ENCODE measurements at regions of chr14 and their contacts with region 1.

Region 1: DNA sequence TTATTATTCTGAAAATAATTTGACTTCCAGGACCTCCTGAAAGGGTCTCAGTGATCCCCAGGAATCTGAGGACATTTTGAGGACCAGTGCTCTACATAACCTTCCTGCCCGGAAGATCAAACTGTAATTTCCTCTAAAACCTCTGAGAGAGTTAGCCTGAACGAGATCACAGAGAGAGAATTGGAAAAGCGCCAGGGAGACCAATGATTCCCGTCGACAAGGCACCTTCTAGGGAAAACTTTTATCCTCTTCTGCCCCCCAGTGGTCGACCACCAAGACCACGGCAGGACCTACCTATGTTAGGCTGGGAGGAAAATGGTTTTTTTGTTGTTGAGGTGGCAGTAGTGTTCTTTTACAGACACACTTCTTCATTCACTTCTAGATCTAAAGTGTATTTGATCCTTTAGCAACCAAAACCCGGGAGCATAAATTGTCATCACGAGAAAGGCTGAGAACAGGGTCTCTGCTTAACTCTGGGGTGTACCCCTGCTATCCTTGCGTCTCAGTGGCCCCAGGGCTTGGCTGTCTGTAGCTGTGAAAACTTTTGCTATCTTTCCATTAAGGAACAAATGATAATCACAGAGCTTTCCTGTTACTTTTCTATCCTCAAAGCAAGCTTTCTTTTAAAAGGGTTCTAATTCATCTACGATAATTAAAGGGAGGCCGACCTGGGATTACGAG is 62.9 kb upstream of the NID2 start:
- DNase-seq: peak; percentile 85 to 89
- H3K4me3 ChIP-seq: no peak overlapping the region
- H3K4me3 Mint-ChIP-seq: no peak overlapping the region
- H3K27ac Mint-ChIP-seq: no peak overlapping the region
- H3K4me1 ChIP-seq: no peaks in the 10 kb centered on the region
- H3K4me1 Mint-ChIP-seq: no peaks in the 10 kb centered on the region
- H3K27me3 ChIP-seq: no peaks in the 10 kb centered on the region
- H3K27me3 Mint-ChIP-seq: no peaks in the 10 kb centered on the region
- CTCF ChIP-seq: peak; percentile 76 to 80

Region 2: DNA sequence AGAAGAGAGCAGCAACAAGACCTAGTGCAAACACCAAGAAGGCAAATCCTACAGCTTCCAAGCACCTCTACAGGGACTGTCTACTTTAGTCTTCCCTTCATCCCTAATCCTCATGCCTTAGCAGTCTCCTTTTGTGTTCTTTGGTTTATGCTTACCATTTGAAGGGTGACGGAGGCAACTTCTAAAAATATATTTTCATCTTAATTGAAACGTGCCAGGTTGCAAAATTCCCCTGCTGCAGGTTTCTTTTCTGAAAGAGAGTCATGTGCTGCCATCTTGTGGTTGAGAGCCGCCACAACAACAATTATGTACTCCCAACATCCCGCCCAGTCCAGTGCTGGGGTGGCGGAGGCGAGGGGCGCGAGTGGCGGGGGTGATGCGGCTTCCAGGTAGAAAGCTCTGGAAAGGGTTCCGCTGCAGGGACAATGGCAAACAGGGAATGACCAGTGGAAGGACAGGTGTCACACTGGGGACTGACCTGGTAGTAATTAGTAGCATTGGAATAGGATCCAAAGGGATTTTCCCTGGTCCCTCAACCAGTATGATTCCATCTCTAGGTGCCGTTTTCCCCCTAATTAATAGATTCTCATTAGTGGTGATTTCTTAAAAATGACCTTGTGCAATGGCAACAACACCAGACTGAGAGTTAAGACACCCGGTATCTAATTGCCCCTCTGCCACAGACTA is 351.6 kb before region 1 on chr14:
- CTCF ChIA-PET with region 1: no interaction called
- POLR2A ChIA-PET with region 1: no interaction called
- intact Hi-C with region 1: loop called (anchors 1 kb)
- DNase-seq: peak; percentile 64 to 77
- H3K4me3 ChIP-seq: no peak overlapping the region
- H3K4me3 Mint-ChIP-seq: peak overlapping the region; percentile 38
- H3K27ac Mint-ChIP-seq: no peak overlapping the region
- H3K4me1 ChIP-seq: no peaks in the 10 kb centered on the region
- H3K4me1 Mint-ChIP-seq: peaks cover 8% of the 10 kb centered on the region
- H3K27me3 ChIP-seq: no peaks in the 10 kb centered on the region
- H3K27me3 Mint-ChIP-seq: peaks cover 3% of the 10 kb centered on the region
- CTCF ChIP-seq: peak; percentile 79 to 87

Region 3: DNA sequence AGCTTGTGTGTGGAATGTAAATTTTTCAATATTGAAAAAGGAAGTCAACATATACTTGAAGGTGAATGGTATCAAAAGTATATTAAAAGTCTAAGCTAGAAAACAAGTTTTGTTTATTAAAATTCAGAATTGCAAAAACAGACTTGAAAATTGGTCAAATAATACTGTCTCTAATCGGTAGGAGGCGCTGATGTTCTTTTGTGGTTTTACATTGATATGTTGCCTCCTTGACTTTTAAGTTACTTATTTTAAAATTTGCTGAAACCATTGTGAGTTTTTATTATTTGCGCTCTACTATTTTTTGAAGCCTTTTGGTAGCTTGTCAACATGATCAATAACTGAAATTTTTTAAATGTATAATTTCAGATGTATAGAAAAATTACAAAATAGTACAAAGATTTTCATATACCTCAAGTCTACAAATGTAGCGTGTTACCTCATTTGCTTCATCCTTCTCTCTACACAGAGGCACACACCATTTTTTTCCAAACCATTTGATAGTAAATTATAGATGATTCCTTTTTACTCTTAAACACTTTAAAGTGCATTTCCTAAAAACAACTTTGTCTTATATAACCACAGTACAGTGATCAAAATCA is 135.5 kb before region 1 on chr14:
- CTCF ChIA-PET with region 1: no interaction called
- POLR2A ChIA-PET with region 1: no interaction called
- intact Hi-C with region 1: loop called (anchors 1 kb)
- DNase-seq: no peak
- H3K4me3 ChIP-seq: no peak overlapping the region
- H3K4me3 Mint-ChIP-seq: no peak overlapping the region
- H3K27ac Mint-ChIP-seq: no peak overlapping the region
- H3K4me1 ChIP-seq: no peaks in the 10 kb centered on the region
- H3K4me1 Mint-ChIP-seq: peaks cover 7% of the 10 kb centered on the region
- H3K27me3 ChIP-seq: no peaks in the 10 kb centered on the region
- H3K27me3 Mint-ChIP-seq: no peaks in the 10 kb centered on the region
- CTCF ChIP-seq: peak; percentile 44 to 60

Region 4: DNA sequence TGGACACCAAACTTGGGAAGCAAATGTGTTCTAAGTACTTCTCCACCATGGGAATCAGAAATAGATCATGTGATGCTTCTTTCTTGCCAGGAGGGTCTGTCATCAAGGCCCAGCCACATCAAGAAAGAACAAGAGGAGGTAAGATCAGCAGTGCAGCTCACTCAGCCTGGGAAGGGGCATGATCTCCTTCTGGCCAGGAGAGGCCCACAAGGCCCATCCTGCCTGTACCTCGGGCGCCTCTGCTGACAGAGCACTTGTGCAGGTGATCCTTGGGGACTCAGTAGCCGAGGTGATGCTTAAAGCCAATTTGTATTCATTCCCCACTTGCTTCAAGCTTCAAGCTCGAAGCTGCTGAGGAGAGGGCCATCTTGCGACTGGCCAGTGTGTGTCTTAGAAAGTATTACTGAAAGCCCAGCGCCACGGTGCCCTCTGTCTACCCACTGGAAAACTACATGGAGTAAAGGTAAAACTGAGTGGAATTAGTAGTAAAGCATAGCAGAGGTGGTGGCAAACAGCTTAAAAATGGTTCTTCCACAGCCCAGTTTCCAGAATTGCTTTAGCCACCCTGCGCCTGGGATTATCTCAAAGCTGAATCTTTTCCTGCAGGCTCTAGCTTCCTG is 116.3 kb before region 1 on chr14:
- CTCF ChIA-PET with region 1: no interaction called
- POLR2A ChIA-PET with region 1: no interaction called
- intact Hi-C with region 1: loop called (anchors 2 kb)
- DNase-seq: peak in 1 of 2 experiments; percentile 35
- H3K4me3 ChIP-seq: no peak overlapping the region
- H3K4me3 Mint-ChIP-seq: no peak overlapping the region
- H3K27ac Mint-ChIP-seq: no peak overlapping the region
- H3K4me1 ChIP-seq: no peaks in the 10 kb centered on the region
- H3K4me1 Mint-ChIP-seq: no peaks in the 10 kb centered on the region
- H3K27me3 ChIP-seq: no peaks in the 10 kb centered on the region
- H3K27me3 Mint-ChIP-seq: no peaks in the 10 kb centered on the region
- CTCF ChIP-seq: peak; percentile 33 to 36

Region 5: DNA sequence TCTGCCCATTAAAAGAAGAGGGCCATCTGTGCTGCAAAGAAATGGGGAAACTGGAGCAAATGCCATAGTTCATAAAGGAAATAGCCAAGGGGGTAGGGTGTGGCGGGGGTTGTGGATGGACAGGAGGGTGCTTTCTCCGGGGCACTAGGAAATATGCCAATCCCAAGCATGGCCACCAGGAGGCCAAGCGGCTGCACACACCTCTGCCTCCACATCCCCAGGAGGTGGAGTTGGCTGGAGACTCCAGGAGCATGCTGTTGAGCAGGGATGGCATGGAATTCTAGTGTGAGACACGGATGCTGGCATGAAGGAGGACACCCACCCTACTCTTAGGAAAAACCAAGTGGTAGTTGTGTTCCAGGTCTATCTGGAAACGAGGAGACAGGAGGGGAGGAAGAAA is 88.1 kb before region 1 on chr14:
- CTCF ChIA-PET with region 1: interaction called, 3 read pairs
- POLR2A ChIA-PET with region 1: no interaction called
- intact Hi-C with region 1: loop called (anchors 1 kb)
- DNase-seq: peak; percentile 50 to 59
- H3K4me3 ChIP-seq: no peak overlapping the region
- H3K4me3 Mint-ChIP-seq: no peak overlapping the region
- H3K27ac Mint-ChIP-seq: no peak overlapping the region
- H3K4me1 ChIP-seq: no peaks in the 10 kb centered on the region
- H3K4me1 Mint-ChIP-seq: peaks cover 9% of the 10 kb centered on the region
- H3K27me3 ChIP-seq: no peaks in the 10 kb centered on the region
- H3K27me3 Mint-ChIP-seq: no peaks in the 10 kb centered on the region
- CTCF ChIP-seq: peak; percentile 56 to 68

Region 6: GRCh38 chr14:52079239-52079956 is 52.4 kb before region 1 on chr14:
- CTCF ChIA-PET with region 1: no interaction called
- POLR2A ChIA-PET with region 1: no interaction called
- intact Hi-C with region 1: loop called (anchors 1 kb)
- DNase-seq: peak; percentile 64 to 78
- H3K4me3 ChIP-seq: no peak overlapping the region
- H3K4me3 Mint-ChIP-seq: peak overlapping the region; percentile 64
- H3K27ac Mint-ChIP-seq: peak overlapping the region; percentile 72
- H3K4me1 ChIP-seq: peaks cover 50% of the 10 kb centered on the region
- H3K4me1 Mint-ChIP-seq: peaks cover 30% of the 10 kb centered on the region
- H3K27me3 ChIP-seq: no peaks in the 10 kb centered on the region
- H3K27me3 Mint-ChIP-seq: no peaks in the 10 kb centered on the region
- CTCF ChIP-seq: no peak

Region 7: DNA sequence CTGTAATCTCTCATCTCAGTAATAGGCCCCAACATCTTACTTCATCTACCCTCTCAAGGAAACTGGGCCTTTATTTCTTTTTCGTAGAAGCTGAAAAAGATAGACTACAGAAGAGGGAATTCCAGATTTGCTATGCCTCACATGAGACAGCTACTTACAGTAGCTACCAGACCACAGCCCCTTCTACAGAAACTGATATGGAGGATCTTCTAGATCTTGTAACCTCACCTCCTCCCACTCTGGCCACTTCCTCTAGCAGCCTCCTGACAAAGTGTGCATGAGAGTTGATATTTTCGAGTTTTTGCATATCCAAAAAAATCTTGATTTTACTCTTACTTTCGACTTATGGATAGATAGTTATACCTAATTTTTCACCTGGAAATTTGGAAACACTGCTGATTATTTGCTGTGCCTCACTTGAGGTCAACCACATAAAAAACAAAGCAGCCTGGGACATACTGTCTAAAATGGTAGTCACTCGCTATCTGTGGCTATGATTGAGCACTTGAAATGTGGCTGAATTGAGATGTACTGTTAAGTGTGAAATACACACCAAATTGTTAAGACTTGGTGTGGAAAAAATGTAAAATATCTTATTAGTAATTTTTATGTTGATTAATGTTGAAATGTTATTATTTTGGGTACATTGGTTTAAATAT is 23.3 kb after region 1 on chr14:
- CTCF ChIA-PET with region 1: no interaction called
- POLR2A ChIA-PET with region 1: no interaction called
- intact Hi-C with region 1: no loop called
- DNase-seq: no peak
- H3K4me3 ChIP-seq: no peak overlapping the region
- H3K4me3 Mint-ChIP-seq: no peak overlapping the region
- H3K27ac Mint-ChIP-seq: no peak overlapping the region
- H3K4me1 ChIP-seq: no peaks in the 10 kb centered on the region
- H3K4me1 Mint-ChIP-seq: no peaks in the 10 kb centered on the region
- H3K27me3 ChIP-seq: no peaks in the 10 kb centered on the region
- H3K27me3 Mint-ChIP-seq: peaks cover 3% of the 10 kb centered on the region
- CTCF ChIP-seq: no peak

Region 8: GRCh38 chr14:52272375-52272774 is 140.6 kb after region 1 on chr14:
- CTCF ChIA-PET with region 1: no interaction called
- POLR2A ChIA-PET with region 1: no interaction called
- intact Hi-C with region 1: loop called (anchors 1 kb)
- DNase-seq: peak in 1 of 2 experiments; percentile 23
- H3K4me3 ChIP-seq: no peak overlapping the region
- H3K4me3 Mint-ChIP-seq: no peak overlapping the region
- H3K27ac Mint-ChIP-seq: no peak overlapping the region
- H3K4me1 ChIP-seq: no peaks in the 10 kb centered on the region
- H3K4me1 Mint-ChIP-seq: peaks cover 6% of the 10 kb centered on the region
- H3K27me3 ChIP-seq: no peaks in the 10 kb centered on the region
- H3K27me3 Mint-ChIP-seq: peaks cover 3% of the 10 kb centered on the region
- CTCF ChIP-seq: no peak

Region 9: GRCh38 chr14:52650774-52651173 is 519.0 kb after region 1 on chr14:
- CTCF ChIA-PET with region 1: no interaction called
- POLR2A ChIA-PET with region 1: no interaction called
- intact Hi-C with region 1: no loop called
- DNase-seq: no peak
- H3K4me3 ChIP-seq: no peak overlapping the region
- H3K4me3 Mint-ChIP-seq: no peak overlapping the region
- H3K27ac Mint-ChIP-seq: no peak overlapping the region
- H3K4me1 ChIP-seq: no peaks in the 10 kb centered on the region
- H3K4me1 Mint-ChIP-seq: no peaks in the 10 kb centered on the region
- H3K27me3 ChIP-seq: no peaks in the 10 kb centered on the region
- H3K27me3 Mint-ChIP-seq: no peaks in the 10 kb centered on the region
- CTCF ChIP-seq: no peak